Activated CD4-positive, alpha-beta memory T cell treated with anti-CD3 and anti-CD28 coated beads, Interleukin-2, amount 10 ng/mL, durations not matched to agents 7 days and 5 days (primary cell): ENCODE measurements at regions of chr7 and their contacts with region 1.

Region 1: DNA sequence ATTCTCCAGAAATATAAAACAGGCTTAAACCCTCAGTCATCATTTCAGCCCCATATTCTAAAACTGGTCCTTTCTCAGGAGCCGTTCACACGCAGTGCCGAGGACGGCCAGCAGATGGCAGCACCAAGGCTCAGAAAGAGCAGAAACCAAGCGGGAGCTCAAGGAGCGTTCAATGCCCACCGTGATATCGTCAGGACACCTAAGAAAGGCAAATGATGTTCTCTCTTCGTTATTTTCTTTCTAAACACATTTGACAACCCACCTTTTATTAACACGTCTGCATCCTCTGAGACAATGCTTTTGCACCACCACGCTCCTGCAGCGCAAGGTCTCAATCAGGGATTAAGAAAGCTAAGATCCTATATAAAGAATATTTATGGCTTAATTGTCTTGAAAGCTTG is 45.7 kb upstream of the RBM33 start:
- DNase-seq: peak; percentile 83
- H3K4me3 Mint-ChIP-seq: no peak overlapping the region
- H3K27ac Mint-ChIP-seq: no peak overlapping the region
- H3K4me1 Mint-ChIP-seq: peaks cover 8% of the 10 kb centered on the region
- H3K27me3 Mint-ChIP-seq: peaks cover 52% of the 10 kb centered on the region

Region 2: GRCh38 chr7:155541986-155542675 is 56.7 kb before region 1 on chr7:
- CTCF ChIA-PET with region 1: no interaction called
- POLR2A ChIA-PET with region 1: no interaction called
- DNase-seq: no peak
- H3K4me3 Mint-ChIP-seq: no peak overlapping the region
- H3K27ac Mint-ChIP-seq: no peak overlapping the region
- H3K4me1 Mint-ChIP-seq: no peaks in the 10 kb centered on the region
- H3K27me3 Mint-ChIP-seq: peaks cover 10% of the 10 kb centered on the region

Region 3: DNA sequence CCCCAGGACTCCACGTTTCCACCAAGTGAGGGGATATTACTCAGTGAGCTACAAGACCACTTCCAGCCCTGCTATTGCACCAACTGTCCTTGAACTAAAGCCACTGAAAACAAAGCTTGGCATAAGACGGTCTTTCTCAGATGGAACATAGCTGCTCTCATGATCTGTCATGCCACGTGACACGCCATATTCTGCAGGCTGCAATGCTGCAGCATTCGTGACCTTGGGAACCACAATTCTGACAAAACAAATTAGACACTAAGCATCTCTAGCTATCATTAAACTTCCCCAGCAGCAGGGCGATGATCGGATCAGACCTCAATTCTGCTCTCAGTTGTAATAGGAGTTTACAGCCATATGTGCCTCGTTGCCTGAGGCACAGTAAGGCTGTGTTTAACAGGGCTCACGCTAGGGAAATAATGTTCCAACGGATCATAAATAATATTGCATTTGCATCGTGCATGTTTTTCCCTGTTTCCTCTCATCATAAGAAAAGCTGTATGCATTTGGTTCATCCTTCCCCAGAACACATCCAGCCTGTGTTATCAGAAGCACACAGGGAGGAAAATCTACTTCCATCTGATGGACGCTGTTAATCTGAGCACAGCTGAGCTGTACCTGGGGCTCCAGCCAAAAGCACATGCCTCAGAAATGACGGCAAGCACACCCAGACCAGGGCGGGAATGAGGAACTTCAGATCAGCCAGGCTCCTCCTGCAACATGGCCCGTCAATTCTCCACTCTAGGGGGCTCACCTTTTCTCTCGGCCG is 13.9 kb before region 1 on chr7:
- CTCF ChIA-PET with region 1: interaction called, 18 read pairs
- POLR2A ChIA-PET with region 1: interaction called, 3 read pairs
- DNase-seq: no peak
- H3K4me3 Mint-ChIP-seq: no peak overlapping the region
- H3K27ac Mint-ChIP-seq: no peak overlapping the region
- H3K4me1 Mint-ChIP-seq: no peaks in the 10 kb centered on the region
- H3K27me3 Mint-ChIP-seq: peaks cover 39% of the 10 kb centered on the region

Region 4: DNA sequence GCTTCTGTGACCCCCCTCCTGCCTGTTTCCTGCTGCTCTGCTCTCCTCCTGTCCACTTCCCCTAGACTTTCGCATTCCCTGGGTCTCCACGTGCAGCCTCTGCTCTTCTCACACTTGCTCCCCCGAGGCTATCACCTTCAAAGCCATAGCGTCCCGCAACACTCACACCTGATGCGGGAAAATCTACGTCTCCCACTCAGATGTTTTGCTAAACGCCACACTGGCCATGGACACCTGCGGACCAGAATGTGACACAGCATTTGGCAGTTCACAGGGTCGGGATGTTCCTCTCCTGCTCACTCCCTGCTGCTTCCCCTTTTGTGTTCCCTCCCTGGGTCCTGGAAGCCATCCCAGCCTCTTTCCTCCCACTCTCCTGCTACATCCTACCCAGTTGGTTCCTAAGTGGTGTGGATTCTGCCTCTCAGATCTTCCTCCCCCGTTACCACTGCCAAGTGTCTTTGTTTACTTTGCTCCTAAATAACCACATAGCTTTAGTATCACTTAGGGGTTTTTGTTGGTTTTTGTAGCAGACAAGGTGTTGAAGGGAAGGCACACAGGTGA is 11.9 kb after region 1 on chr7:
- CTCF ChIA-PET with region 1: interaction called, 23 read pairs
- POLR2A ChIA-PET with region 1: no interaction called
- DNase-seq: no peak
- H3K4me3 Mint-ChIP-seq: no peak overlapping the region
- H3K27ac Mint-ChIP-seq: no peak overlapping the region
- H3K4me1 Mint-ChIP-seq: no peaks in the 10 kb centered on the region
- H3K27me3 Mint-ChIP-seq: peaks cover 11% of the 10 kb centered on the region

Region 5: GRCh38 chr7:155731376-155731775 is 132.6 kb after region 1 on chr7:
- CTCF ChIA-PET with region 1: interaction called, 36 read pairs
- POLR2A ChIA-PET with region 1: no interaction called
- DNase-seq: no peak
- H3K4me3 Mint-ChIP-seq: no peak overlapping the region
- H3K27ac Mint-ChIP-seq: no peak overlapping the region
- H3K4me1 Mint-ChIP-seq: peaks cover 18% of the 10 kb centered on the region
- H3K27me3 Mint-ChIP-seq: no peaks in the 10 kb centered on the region

Region 6: DNA sequence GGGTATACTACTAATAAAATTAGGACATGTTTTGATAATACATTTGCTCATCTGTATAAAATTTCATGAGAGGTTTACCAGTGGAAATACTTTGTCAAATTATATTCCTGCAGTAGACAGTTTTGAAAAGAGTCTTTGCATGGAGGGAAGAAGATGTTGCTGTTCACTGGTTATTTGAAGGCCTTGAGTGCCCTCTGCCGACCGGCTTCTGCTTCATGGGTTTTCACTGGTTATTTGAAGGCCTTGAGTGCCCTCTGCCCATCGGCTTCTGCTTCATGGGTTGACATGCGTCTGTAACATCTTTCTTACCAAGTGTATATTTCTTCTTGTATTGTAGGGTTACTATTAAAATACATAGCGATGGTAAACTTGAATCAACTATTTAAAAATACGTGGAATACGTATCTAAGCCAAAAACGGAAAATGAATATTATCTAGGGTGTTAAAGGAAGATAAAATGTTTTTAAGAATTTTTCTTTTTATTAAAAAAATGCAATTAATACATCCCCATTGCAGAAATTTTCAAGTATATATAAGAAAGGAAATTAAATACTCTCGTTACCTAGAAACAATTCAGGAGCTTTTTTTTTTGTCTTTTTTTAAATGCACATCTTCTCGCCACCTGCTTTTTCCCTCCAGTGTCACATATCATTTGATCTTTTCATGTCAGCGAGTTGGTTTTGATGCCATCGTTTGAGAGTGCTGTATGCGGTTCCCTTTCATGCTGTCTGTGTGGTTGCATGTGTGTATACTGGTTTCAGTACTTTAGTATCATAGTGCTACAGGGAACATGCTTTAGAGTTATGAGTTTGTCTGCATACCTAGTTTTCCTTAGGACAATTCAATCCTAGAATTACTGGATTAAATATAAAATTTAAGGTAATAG is 140.1 kb after region 1 on chr7:
- CTCF ChIA-PET with region 1: interaction called, 36 read pairs
- POLR2A ChIA-PET with region 1: no interaction called
- DNase-seq: peak; percentile 69
- H3K4me3 Mint-ChIP-seq: no peak overlapping the region
- H3K27ac Mint-ChIP-seq: peak overlapping the region; percentile 42
- H3K4me1 Mint-ChIP-seq: peaks cover 43% of the 10 kb centered on the region
- H3K27me3 Mint-ChIP-seq: no peaks in the 10 kb centered on the region

Region 7: GRCh38 chr7:155763691-155764437 is 165.1 kb after region 1 on chr7:
- CTCF ChIA-PET with region 1: interaction called, 156 read pairs
- POLR2A ChIA-PET with region 1: interaction called, 6 read pairs
- DNase-seq: peak; percentile 77
- H3K4me3 Mint-ChIP-seq: peak overlapping the region; percentile 73
- H3K27ac Mint-ChIP-seq: peak overlapping the region; percentile 99
- H3K4me1 Mint-ChIP-seq: peaks cover 54% of the 10 kb centered on the region
- H3K27me3 Mint-ChIP-seq: no peaks in the 10 kb centered on the region

Region 8: GRCh38 chr7:155769701-155770100 is 170.9 kb after region 1 on chr7:
- CTCF ChIA-PET with region 1: interaction called, 156 read pairs
- POLR2A ChIA-PET with region 1: interaction called, 6 read pairs
- DNase-seq: no peak
- H3K4me3 Mint-ChIP-seq: no peak overlapping the region
- H3K27ac Mint-ChIP-seq: no peak overlapping the region
- H3K4me1 Mint-ChIP-seq: peaks cover 16% of the 10 kb centered on the region
- H3K27me3 Mint-ChIP-seq: no peaks in the 10 kb centered on the region